Common myeloid progenitor, CD34-positive (primary cell): ENCODE measurements at regions of chr17 and their contacts with region 1.

Region 1: DNA sequence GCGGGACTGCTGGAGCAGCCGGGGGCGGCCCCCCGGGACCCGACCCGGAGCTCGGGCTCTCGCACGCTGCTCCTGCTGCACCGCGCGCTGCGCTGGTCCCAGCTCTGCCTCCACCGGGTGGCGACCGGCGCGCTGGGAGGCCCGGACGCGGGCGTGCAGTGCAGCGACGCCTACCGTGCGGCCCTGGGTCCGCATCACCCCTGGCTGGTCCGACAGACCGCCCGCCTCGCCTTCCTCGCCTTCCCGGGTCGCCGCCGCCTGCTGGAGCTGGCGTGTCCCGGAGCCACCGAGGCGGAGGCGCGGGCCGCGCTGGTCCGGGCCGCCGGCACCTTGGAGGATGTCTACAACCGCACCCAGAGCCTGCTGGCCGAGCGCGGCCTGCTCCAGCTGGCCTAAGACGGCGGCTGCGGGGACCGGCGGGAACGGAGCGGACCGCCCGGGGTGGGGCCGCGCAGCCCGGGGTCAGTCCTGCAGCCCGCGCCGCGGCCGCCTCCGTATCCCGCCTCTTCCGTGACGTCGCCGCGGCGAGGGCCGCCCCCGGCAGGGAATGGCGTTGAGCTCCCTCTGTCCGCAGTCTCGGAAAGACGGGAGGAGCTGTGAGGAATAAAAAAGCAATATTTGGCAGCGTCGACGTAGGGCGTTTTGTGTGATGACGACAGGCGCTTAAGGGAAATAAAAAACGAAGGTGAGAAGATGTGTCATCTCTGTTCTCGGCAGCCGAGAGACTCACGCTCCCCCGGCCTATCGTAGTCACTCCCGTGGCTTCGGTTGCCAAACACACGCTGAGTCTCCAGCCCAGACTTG is 1.3 kb downstream of the GLTPD2 start:
- DNase-seq: peak; percentile 80 to 83 (median 81)
- H3K4me3 ChIP-seq: peak overlapping the region; percentile 33 to 80 (median 63)
- H3K27ac ChIP-seq: peak overlapping the region in 1 of 2 experiments; percentile 38
- H3K4me1 ChIP-seq: peaks cover 0 to 37% (median 29%) of the 10 kb centered on the region in 4 experiments
- H3K27me3 ChIP-seq: peaks cover 0 to 50% (median 28%) of the 10 kb centered on the region in 5 experiments

Region 2: GRCh38 chr17:4881761-4882555 is 91.9 kb after region 1 on chr17:
- CTCF ChIA-PET with region 1: interaction called, 40 read pairs
- POLR2A ChIA-PET with region 1: no interaction called
- DNase-seq: peak; percentile 38 to 51 (median 50)
- H3K4me3 ChIP-seq: no peak overlapping the region
- H3K27ac ChIP-seq: no peak overlapping the region
- H3K4me1 ChIP-seq: no peaks in the 10 kb centered on the region
- H3K27me3 ChIP-seq: no peaks in the 10 kb centered on the region

Region 3: GRCh38 chr17:4891411-4892342 is 101.6 kb after region 1 on chr17:
- CTCF ChIA-PET with region 1: interaction called, 12 read pairs
- POLR2A ChIA-PET with region 1: no interaction called
- DNase-seq: no peak
- H3K4me3 ChIP-seq: no peak overlapping the region
- H3K27ac ChIP-seq: no peak overlapping the region
- H3K4me1 ChIP-seq: no peaks in the 10 kb centered on the region
- H3K27me3 ChIP-seq: no peaks in the 10 kb centered on the region